ENCODE measurements at regions of chr4 and their contacts with region 1.

Region 1: DNA sequence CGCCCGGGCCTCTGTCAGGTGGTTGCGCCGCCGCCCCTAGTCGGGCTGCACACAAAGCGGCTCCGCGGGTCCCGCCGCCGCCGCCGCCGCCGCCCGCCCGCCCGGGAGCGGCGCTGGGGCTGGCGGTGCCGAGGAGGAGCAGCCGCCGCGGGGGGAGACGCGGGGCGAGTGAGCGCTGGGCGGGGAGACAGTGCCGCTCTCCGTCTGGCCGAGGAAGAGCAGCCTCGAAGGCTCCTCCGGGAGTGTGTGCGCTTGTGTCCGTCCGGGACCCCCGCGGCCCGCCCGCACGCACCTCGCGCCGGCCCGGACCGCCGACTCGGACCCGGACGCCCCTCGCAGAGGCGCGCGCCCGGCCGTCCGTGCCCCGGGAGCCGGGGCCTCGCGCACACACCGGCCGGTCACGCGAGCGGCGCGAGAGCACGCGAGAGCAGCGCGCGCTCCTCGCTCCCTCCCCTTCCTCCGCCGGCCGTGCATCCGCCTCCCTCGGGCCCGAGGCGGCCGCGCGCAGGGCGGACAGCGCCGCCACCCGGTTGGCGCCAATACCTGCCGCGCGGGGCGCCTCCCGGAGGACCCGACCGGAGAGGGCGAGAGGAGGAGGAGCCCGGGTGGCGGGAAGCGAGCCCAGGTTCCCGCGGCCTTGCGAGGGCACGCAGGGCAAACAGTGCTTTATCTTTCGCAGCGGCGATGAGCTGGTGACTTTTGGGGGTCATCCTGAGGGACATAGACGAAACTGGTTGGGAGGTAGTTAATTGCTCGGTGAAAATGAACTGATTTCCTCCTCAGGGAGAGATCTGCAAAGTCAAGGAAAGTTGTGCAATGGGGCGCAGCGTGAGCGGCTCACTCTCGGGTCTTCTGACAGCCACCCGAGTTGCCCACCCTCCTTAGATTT is at the start of gene PDS5A:
- DNase-seq: peak; percentile 94
- ATAC-seq: peak; percentile 94
- total RNA-seq, gene PDS5A: 32.6 TPM

Region 2: DNA sequence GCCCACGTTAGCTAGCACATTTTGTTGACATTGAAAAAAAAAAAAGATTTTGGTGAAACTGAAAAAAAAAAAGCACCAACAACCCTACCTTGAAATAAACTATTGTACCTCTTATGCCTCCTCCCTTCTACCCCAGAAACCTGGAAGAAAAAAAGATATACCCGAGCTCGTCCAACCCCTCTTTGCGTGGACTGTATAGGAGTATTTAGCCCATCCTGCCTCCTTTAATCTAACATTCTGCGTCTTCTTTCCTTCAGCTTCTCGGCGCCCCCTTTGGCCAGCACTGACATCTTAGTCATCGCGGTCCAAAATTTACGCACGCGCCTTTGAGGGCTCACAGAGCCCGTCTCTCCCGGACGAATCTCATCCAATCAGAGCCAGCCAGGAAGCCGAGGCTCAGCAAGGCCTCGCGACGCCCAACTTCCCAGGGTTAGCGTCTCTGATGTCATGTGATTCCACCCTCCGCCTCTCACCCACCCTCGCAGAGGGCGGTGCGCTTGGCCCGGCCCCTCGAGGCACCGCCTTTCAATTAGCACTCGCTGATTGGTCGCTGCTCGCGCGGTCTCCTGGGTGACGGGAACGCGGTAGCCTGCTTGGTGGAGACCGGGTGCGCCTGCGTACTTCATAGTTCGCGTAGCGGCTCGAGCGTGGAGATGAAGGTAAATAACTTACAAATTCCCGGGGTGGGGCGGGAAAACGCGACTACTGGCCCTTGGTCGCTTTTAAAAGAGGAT is 795.7 kb before region 1 on chr4 and contains the start of gene WDR19:
- intact Hi-C with region 1: loop called (anchors 5 kb)
- DNase-seq: peak; percentile 100
- ATAC-seq: peak; percentile 100
- total RNA-seq, gene WDR19: 6.5 TPM

Region 3: GRCh38 chr4:39436218-39436560 is 541.5 kb before region 1 on chr4:
- intact Hi-C with region 1: no loop called
- DNase-seq: no peak
- ATAC-seq: no peak

Region 4: DNA sequence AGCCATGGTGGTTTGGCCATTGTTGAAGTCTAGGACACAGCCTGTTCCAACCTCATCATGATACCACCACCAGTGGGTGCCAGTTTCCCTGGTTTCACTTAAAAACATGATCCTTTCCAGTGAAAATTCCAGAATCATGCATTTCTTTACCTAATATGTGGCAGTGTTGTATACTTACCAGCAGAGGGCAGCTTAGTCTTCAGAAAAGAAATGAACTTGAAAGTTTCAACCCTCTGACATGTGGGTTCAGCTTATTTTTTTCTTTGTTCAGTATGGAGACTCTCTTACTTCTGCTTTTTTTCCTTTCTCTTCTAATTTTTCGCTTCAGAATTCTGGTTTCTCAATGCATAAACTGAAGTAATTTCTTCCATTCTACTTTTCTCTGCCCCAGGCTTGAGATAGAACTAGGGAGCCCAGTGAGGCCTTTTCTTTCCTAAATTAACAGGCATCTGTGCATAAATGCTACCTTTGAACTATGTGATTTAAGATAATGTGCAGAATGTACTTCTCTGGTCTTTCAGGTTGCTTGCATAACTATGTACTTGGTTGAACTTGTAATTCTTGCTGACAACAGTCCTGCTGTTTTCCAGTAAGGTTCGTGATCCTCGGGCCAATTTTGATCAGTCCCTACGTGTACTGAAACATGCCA is 508.2 kb before region 1 on chr4:
- intact Hi-C with region 1: loop called (anchors 1 kb)
- DNase-seq: no peak
- ATAC-seq: peak; percentile 80

Region 5: DNA sequence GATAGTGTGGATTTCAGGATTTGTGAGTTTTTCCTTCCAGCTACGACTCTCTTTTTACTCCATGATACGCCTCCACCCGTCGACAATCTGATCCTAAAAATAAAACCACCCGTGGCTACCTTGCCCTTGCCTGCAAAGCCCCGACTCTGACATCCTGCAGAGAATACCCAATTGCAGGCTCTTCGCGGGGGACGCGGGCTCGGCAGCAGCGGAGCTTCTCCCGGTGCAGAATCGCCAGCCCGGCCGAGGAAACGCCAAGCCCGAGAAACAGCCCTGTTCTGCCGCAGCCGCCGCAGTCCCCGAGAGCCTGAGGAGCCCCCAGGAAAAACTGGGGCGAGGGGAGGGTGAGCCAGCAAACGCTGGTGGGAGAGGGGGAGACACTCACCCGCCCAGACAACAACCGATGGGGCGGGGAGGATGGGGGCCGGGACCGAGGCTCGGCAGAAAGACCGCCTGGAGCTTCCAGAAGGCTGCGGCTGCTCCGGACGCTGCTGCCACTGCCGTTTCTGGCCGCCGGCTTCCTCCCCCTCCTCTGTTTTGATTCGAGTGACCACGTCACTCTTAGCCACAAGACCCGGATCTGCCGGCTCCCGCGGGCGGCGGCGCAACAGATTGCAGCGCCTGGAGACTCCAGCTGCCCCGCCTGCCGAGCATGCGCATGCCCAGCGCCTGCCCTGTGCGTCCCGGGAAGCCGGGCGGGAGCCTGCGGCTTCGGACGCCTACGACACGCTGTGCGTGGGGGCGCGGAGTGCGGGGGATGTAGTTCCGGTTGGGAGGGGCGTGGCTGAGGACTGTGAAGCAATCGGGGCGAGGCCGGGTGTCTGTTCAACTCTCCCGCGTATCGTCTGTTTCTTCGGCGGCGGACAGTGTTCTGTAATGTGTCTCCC is 339.1 kb before region 1 on chr4 and contains the start of gene SMIM14:
- intact Hi-C with region 1: loop called (anchors 5 kb)
- DNase-seq: peak; percentile 99
- ATAC-seq: peak; percentile 99
- total RNA-seq, gene SMIM14: 11.0 TPM

Region 6: GRCh38 chr4:40046311-40046980 is 68.7 kb after region 1 on chr4:
- intact Hi-C with region 1: no loop called
- DNase-seq: no peak
- ATAC-seq: no peak

Region 7: DNA sequence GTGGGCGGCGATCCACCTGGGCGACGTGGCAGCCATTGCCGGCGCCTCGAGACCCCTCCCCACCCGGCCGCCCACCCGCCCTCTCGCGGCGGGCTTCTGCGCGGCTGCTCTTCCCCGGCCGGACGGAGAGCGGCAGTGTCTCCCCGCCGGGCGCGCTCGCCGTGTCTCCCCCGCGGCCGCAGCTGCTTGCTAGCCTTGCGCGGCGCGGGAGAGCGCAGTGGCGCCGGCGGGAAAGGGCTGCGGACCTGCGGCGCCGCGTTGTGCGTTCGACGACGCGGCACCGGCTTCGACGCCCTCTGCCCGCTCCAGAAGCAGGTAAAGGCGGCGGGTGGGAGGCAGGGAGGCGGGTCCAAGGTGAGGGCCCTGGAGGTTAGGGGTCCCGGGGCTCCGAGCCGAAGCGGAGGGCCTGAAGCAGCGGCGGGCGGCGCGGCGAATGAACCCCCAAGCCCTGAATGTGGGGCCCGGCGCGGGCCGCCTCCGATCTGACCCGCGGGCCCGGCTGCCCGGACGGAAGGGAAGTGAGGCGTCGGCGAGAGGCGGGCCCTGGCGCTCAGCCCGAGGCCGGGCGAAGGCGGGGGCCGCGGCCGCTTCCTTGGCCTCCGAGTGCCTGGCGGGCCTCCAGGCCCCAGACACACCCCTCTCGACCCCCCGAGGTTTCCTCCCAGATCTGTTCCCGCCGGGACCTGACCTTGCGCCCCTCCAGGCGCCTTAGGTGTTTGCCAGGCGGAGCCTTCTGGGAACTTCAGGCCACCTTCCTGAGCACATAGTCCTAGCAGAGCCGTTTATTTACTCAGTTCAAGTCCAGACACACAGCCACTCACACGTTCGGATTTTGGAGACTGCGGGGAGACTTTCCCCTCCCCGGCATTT is 79.2 kb after region 1 on chr4 and contains the start of gene N4BP2:
- intact Hi-C with region 1: loop called (anchors 2 kb)
- DNase-seq: peak; percentile 94
- ATAC-seq: peak; percentile 86
- total RNA-seq, gene N4BP2: 4.1 TPM

Measured in Right ventricle myocardium inferior (tissue), 1 donor.